Ascending aorta (tissue), 2 donors: ENCODE measurements at regions of chr16 and their contacts with region 1.

Region 1: DNA sequence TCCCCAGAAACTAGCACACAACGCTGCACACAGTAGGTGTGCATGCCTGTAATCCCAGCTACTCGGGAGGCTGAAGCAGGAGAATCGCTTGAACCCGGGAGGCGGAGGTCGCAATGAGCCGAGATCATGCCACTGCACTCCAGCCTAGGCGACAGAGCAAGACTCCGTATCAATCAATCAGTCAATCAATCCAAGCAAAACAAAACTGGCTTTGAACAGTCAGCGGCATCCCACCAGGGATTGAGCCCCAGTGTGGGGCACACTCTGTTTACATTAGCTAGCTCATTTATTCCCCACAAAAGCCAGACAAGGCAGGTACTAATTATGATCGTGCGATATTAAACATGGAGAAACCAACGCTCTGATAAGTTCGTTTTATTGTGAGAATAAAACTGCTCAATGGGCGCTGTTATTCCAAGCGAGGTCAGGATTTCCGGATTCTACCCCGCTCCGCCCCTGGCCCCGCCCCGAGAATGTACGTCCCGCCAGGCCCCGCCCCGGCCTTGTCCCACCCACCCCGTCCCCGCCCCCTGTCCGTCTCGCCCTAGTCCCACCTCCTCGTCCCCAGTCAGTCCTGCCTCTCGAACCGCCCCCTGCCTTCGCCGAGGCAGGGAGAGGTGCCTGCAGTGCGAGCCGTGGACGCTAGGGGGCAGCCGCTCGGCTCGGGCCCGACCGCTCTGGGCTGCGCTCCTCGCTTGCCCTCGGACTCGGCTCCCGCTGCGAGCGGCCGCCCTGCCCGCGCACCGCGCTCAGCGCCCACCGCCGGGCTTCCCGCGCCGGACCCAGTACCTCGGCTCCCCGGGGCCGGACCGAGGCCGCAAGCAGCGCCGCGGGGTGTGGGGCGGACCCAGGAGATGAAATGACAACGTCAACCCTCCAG is at the start of gene VPS4A:
- DNase-seq: peak; percentile 82 to 97
- H3K4me3 ChIP-seq: peak within 1 kb of the TSS; percentile 79 to 98
- H3K27ac ChIP-seq: peak within 1 kb of the TSS; percentile 76
- H3K4me1 ChIP-seq: peaks cover 6 to 18% of the 10 kb centered on the region in 2 donors
- H3K27me3 ChIP-seq: no peaks in the 10 kb centered on the region
- CTCF ChIP-seq: peak; percentile 89 to 96 (median 94)
- total RNA-seq, gene VPS4A: 38.3 TPM

Region 2: GRCh38 chr16:68538880-68539701 is 771.8 kb before region 1 on chr16 and contains the start of gene ZFP90:
- intact Hi-C with region 1: loop called (anchors 10 kb)
- DNase-seq: peak; percentile 30 to 93
- H3K4me3 ChIP-seq: peak within 1 kb of the TSS; percentile 85 to 97
- H3K27ac ChIP-seq: peak within 1 kb of the TSS; percentile 70 to 80
- H3K4me1 ChIP-seq: peaks cover 0 to 7% of the 10 kb centered on the region in 2 donors
- H3K27me3 ChIP-seq: no peaks in the 10 kb centered on the region
- CTCF ChIP-seq: no peak
- total RNA-seq, gene ZFP90: 11.8 TPM

Region 3: GRCh38 chr16:69003500-69003899 is 307.4 kb before region 1 on chr16:
- intact Hi-C with region 1: no loop called
- DNase-seq: no peak
- H3K4me3 ChIP-seq: no peak overlapping the region
- H3K27ac ChIP-seq: no peak overlapping the region
- H3K4me1 ChIP-seq: no peaks in the 10 kb centered on the region
- H3K27me3 ChIP-seq: no peaks in the 10 kb centered on the region
- CTCF ChIP-seq: no peak

Region 4: DNA sequence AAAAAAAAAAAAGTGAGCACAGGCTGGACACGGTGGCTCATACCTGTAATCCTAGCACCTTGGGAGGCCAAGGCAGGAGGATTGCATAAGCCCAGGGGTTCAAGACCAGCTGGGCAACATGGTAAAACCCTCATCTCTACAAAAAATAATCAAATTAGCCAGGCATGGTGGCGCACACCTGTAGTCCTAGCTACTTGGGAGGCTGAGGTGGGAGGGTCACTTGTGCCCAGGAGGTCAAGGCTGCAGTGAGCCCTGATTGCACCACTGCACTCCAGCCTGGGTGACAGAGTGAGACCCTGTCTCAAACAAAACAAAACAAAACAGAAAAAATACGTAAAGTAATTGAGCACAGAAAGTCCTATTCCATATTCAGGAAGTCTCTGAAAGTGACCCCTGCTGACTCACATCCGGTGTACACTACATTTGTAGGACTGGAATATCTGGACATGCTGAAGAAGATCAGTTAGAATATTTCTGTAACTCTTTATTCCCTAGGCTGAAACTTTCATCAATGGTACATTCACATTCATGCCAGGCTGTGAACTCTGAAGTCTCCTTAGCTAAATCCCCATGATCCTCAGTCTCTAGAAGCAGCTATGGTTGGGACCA is 271.5 kb before region 1 on chr16:
- intact Hi-C with region 1: no loop called
- DNase-seq: no peak
- H3K4me3 ChIP-seq: no peak overlapping the region
- H3K27ac ChIP-seq: no peak overlapping the region
- H3K4me1 ChIP-seq: no peaks in the 10 kb centered on the region
- H3K27me3 ChIP-seq: no peaks in the 10 kb centered on the region
- CTCF ChIP-seq: no peak

Region 5: DNA sequence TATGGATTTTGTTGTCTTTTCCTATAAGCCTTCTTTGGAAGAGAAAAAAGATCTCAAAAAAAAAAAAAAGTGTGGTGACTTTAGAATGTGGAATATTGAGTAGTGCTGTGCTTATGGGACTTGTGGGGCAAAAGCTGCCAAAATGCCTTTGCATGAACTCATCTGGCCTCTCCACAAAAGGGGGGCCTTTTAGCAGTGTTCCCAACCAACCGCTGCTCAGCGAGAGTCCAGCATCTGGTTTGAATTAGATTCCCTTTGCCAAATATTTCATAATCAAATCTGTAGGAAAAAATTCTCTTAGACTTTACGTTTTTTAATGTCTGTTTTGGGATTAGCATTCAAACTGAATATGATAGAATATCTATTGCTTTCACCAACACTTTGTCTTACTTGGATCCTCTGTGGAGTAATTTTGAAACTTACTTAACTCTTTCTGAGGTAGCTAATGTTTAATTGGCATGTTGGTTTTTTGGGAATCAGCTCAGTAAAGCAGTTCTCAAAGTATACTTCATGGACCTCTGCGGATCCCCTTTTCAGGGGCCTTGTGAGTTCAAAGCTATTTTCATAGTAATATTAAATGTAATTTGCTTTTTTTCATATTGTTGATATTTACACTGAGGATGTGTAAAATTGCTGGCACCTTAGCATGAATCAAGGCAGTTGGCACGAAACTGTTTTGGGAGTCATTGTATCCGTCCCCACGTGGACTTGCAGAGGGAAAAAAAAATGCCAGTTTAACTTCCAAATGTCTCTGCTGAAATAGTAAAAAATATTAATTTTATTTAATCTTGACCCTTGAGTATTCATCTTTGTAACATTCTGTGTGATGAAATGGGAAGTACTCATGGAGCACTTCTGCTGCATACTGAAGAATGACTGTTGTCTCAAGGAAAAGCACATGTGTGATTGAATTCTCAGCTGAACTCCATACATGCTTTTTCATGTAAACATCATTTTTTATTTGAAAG is 34.5 kb before region 1 on chr16:
- intact Hi-C with region 1: loop called (anchors 5 kb)
- DNase-seq: peak; percentile 16 to 89
- H3K4me3 ChIP-seq: no peak overlapping the region
- H3K27ac ChIP-seq: peak overlapping the region; percentile 12 to 33
- H3K4me1 ChIP-seq: peaks cover 0 to 19% of the 10 kb centered on the region in 2 donors
- H3K27me3 ChIP-seq: no peaks in the 10 kb centered on the region
- CTCF ChIP-seq: no peak

Region 6: GRCh38 chr16:69330286-69331109 is 19.6 kb after region 1 on chr16 and contains the start of gene PDF:
- intact Hi-C with region 1: loop called (anchors 1 kb)
- DNase-seq: peak; percentile 72 to 96
- H3K4me3 ChIP-seq: peak within 1 kb of the TSS; percentile 73 to 80
- H3K27ac ChIP-seq: peak within 1 kb of the TSS; percentile 89 to 94
- H3K4me1 ChIP-seq: peaks cover 4 to 12% of the 10 kb centered on the region in 2 donors
- H3K27me3 ChIP-seq: no peaks in the 10 kb centered on the region
- CTCF ChIP-seq: no peak
- total RNA-seq, gene PDF: 49.9 TPM

Region 7: DNA sequence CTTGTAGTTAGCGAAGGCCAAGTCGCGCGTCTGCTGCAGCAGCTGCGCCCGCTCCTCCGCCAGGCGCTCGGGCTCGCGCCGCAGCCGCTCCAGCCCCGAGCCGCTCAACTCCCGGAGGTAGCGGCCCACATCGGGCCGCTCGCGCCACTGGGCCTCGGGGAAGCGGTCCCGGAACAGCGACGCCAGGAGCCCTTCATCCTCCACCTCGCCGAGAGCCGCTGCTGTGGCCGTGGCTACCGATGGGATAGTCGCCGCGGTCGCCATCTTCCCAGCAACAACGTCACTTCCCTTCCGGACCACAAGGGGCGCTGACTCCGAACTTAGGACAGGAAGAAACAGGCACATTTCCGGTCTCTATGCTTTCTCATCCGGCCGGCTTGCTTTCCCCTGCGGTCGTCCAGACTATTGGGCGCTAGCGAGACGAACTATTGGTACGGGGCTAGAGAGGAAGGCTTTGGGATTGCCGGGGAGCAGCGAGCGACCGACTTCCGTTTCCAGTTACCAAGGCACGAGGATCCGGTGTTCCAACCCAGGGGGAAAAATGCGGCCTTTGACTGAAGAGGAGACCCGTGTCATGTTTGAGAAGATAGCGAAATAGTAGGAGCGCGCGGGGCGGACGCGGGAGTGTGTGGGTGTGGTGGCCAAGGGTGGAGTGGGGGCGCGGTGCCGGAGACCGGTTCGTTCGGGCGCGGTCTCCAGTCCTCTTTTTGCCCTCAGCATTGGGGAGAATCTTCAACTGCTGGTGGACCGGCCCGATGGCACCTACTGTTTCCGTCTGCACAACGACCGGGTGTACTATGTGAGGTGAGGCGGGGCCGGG is 28.6 kb after region 1 on chr16 and contains the starts of genes COG8 and NIP7:
- intact Hi-C with region 1: loop called (anchors 1 kb)
- DNase-seq: peak; percentile 88 to 98
- H3K4me3 ChIP-seq: peak within 1 kb of the TSS; percentile 93 to 95
- H3K27ac ChIP-seq: peak within 1 kb of the TSS; percentile 88 to 91
- H3K4me1 ChIP-seq: peaks cover 12 to 23% of the 10 kb centered on the region in 2 donors
- H3K27me3 ChIP-seq: no peaks in the 10 kb centered on the region
- CTCF ChIP-seq: peak; percentile 80 to 94 (median 82)
- total RNA-seq, gene COG8: 24.7 TPM
- total RNA-seq, gene NIP7: 5.2 TPM